ENCODE measurements at regions of chr12 and their contacts with region 1.

Region 1: GRCh38 chr12:79573820-79574219 is 116.9 kb downstream of the PAWR start:
- DNase-seq: no peak
- ATAC-seq: no peak
- H3K4me3 ChIP-seq: no peak overlapping the region
- H3K27ac ChIP-seq: no peak overlapping the region
- H3K4me1 ChIP-seq: no peaks in the 10 kb centered on the region
- H3K27me3 ChIP-seq: no peaks in the 10 kb centered on the region
- CTCF ChIP-seq: no peak

Region 2: DNA sequence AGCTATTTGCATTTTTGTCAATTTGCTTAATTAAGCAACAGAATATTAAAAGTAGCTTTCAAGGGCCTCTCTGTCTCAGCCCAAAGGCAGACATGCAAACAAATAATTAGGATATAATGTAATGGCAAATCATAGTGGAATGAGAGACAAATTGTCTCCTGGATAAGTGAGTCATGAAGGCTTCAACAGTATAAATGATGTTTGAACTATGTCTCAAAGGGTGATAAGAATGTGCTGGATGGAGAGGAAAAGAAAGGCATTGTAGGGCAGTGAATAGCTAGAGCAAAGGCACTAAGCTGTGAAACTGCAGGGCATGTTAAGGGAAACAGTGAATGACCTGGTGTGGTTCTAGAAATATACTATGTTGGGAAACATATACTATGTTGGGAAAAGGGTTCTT is 414.5 kb after region 1 on chr12:
- intact Hi-C with region 1: loop called in 1 of 10 experiments (anchors 5 kb)
- DNase-seq: no peak
- ATAC-seq: no peak
- H3K4me3 ChIP-seq: no peak overlapping the region
- H3K27ac ChIP-seq: no peak overlapping the region
- H3K4me1 ChIP-seq: peaks cover 0 to 11% (median 0%) of the 10 kb centered on the region in 9 donors
- H3K27me3 ChIP-seq: no peaks in the 10 kb centered on the region
- CTCF ChIP-seq: no peak

Measured in heart right ventricle (tissue), 16 donors.